SK-N-SH (cell line): ENCODE measurements at regions of chr11 and their contacts with region 1.

Region 1: DNA sequence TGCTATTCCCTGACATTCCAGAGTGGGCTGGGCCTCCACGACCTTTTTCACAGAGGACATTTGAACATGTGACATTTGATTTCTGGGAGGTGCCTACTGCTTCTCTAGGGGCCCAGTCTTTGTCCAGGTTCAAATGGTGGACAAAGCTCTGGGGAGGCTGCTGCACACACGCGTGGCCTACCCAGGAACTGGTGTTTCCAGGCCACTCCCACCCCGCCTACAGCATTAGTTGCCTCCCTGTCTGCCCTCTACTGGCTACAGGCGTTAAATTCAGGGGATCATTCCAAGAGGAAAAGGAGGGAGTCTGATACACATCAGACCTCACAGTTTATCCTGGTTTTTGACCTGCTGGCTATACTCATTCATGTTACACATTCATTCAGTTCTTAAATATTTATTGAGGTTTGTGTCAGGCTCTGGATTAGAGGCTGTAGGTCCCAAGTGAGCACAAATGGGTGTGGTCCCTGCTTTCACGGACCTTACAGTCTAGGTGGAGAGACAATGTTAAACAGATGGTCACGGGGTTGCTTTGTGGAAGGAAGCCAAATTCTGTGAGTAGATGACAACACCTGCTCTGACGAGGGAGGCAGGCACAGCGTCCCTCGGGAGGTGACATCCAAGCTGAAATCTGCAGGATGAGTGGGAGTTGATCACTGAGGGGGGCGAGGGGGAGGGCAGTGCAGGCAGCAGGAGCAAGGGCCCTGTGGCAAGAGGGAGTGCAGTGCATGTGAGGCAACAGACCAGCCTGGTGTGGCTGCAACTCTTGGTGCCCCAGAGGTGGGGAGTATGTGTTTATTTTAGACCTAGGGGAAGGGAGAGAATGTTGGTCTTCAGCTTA is 11.8 kb downstream of the TUB start:
- DNase-seq: peak; percentile 90
- H3K4me3 ChIP-seq: no peak overlapping the region
- H3K27ac ChIP-seq: no peak overlapping the region; a peak in 1 of 4 replicates
- H3K4me1 ChIP-seq: peaks cover 0 to 45% of the 10 kb centered on the region in 2 experiments; a peak in 1 of 4 replicates
- H3K27me3 ChIP-seq: no peaks in the 10 kb centered on the region
- CTCF ChIP-seq: peak; percentile 73
- EP300 ChIP-seq: no peak
- RAD21 ChIP-seq: peak; percentile 64

Region 2: DNA sequence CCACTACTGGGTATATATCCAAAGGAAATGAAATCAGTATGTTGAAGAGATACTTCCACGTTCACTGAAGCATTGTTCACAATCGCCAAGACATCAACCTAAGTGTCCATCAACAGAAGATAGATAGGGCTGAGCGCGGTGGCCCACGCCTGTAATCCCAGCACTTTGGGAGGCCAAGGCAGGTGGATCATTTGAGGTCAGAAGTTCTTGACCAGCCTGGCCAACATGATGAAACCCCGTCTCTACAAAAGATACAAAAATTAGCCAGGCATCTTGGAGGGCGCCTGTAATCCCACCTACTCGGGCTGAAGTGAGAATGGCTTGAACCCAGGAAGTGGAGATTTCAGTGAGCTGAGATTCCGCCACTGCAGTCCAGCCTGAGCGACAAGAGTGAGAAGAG is 93.0 kb before region 1 on chr11:
- CTCF ChIA-PET with region 1: interaction called, 574 read pairs
- POLR2A ChIA-PET with region 1: no interaction called
- DNase-seq: no peak
- H3K4me3 ChIP-seq: no peak overlapping the region
- H3K27ac ChIP-seq: no peak overlapping the region
- H3K4me1 ChIP-seq: no peaks in the 10 kb centered on the region
- H3K27me3 ChIP-seq: no peaks in the 10 kb centered on the region
- CTCF ChIP-seq: no peak
- EP300 ChIP-seq: no peak
- RAD21 ChIP-seq: no peak

Region 3: GRCh38 chr11:8025816-8026215 is 67.0 kb before region 1 on chr11:
- CTCF ChIA-PET with region 1: interaction called, 620 read pairs
- POLR2A ChIA-PET with region 1: no interaction called
- DNase-seq: no peak
- H3K4me3 ChIP-seq: peak overlapping the region in 1 of 2 experiments; percentile 13; a peak in 2 of 4 replicates
- H3K27ac ChIP-seq: peak overlapping the region; percentile 47 to 59; a peak in 3 of 4 replicates
- H3K4me1 ChIP-seq: peaks cover 0 to 4% of the 10 kb centered on the region in 2 experiments; a peak in 1 of 4 replicates
- H3K27me3 ChIP-seq: no peaks in the 10 kb centered on the region
- CTCF ChIP-seq: no peak
- EP300 ChIP-seq: peak in 1 of 2 experiments; percentile 67; a peak in 1 of 4 replicates
- RAD21 ChIP-seq: no peak

Region 4: DNA sequence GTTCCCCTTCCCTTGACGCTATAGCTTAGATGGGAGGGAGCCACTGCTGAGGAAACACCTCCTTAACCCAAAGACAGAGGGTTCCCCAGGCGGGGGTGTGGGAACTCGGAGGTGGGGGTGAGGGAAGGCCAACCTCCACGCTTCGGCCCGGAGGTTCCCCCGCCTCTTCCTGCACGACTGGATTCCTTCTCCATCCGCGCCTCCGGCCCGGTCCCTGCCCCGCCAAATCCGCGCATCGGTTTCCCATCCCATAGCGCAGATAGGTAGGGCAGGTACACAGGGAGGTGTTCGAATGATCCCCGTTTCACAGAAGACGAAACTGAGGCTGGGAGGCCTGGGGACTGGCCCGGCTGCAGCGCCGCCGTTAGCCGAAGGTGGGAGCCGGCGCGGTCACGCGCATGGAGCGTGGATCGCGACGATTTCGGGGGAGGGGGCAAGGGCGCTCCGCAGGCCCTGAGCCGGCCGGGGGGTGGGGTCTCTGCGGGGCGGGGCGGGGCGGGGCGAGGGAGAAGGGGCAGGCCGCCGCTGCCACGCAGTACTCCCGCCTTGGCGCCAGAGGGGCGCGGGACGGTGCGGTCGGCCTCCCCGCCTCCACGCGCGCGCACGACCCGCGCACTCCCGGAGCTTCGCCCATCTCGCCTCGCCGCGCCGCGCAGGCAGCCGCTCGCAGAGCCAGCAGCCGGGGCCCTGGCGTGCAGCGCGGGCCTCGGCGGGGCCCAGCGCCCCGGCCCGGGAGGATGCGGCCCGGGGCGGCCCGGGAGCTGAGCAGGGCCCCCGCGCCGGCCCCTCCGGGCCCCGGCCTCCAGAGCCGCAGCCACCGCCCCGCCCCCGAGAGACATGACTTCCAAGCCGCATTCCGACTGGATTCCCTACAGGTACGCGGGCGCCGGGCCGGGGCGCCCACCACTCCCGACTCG is 11.9 kb before region 1 on chr11 and contains the start of gene TUB:
- CTCF ChIA-PET with region 1: interaction called, 176 read pairs
- POLR2A ChIA-PET with region 1: interaction called, 5 read pairs
- DNase-seq: peak; percentile 97
- H3K4me3 ChIP-seq: peak within 1 kb of the TSS; percentile 67 to 73
- H3K27ac ChIP-seq: peak within 1 kb of the TSS in 1 of 2 experiments; percentile 92; a peak in 2 of 4 replicates
- H3K4me1 ChIP-seq: peaks cover 18 to 52% of the 10 kb centered on the region in 2 experiments; a peak in 3 of 4 replicates
- H3K27me3 ChIP-seq: no peaks in the 10 kb centered on the region
- CTCF ChIP-seq: no peak
- EP300 ChIP-seq: no peak
- RAD21 ChIP-seq: no peak
- polyA plus RNA-seq, gene TUB: 11.3 and 16.9 TPM in 2 replicates

Region 5: GRCh38 chr11:8177136-8177535 is 84.3 kb after region 1 on chr11:
- CTCF ChIA-PET with region 1: no interaction called
- POLR2A ChIA-PET with region 1: no interaction called
- DNase-seq: no peak
- H3K4me3 ChIP-seq: no peak overlapping the region
- H3K27ac ChIP-seq: no peak overlapping the region
- H3K4me1 ChIP-seq: no peaks in the 10 kb centered on the region; a peak in 1 of 4 replicates
- H3K27me3 ChIP-seq: peaks cover 5% of the 10 kb centered on the region; the same call in 1 of the 2 replicates
- CTCF ChIP-seq: no peak
- EP300 ChIP-seq: no peak
- RAD21 ChIP-seq: no peak